Aorta (tissue), 5 donors: ENCODE measurements at regions of chr10 and their contacts with region 1.

Region 1: DNA sequence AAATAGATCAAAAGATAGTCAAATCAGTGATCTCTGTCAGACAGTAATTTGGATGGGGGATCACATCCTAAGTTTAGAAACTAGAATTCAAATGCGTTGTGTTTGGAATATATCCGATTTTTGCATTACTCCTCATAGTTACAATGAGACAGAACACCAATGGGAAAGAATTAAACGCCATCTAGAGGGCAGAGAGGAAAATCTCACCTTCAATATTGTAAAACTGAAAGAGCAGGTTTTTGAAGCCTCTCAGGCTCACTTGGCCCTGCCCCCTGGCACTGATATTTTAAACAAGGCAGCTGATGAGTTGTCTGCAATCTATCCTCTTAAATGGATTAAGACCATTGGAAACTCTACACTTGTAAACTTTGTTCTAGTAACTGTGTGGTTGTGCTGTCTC is 17.7 kb downstream of the FRG2B start:
- DNase-seq: no peak
- ATAC-seq: no peak
- H3K4me3 ChIP-seq: no peak overlapping the region
- H3K27ac ChIP-seq: no peak overlapping the region
- H3K4me1 ChIP-seq: no peaks in the 10 kb centered on the region
- H3K27me3 ChIP-seq: peaks cover 0 to 2% of the 10 kb centered on the region in 2 donors

Region 2: GRCh38 chr10:133329491-133330202 is 279.2 kb before region 1 on chr10:
- intact Hi-C with region 1: loop called in 1 of 2 experiments (anchors 5 kb)
- DNase-seq: peak; percentile 89 to 96
- ATAC-seq: peak; percentile 86
- H3K4me3 ChIP-seq: no peak overlapping the region
- H3K27ac ChIP-seq: no peak overlapping the region
- H3K4me1 ChIP-seq: no peaks in the 10 kb centered on the region
- H3K27me3 ChIP-seq: peaks cover 0 to 1% of the 10 kb centered on the region in 2 donors